Right ventricle myocardium inferior (tissue), 1 donor: ENCODE measurements at regions of chrX and their contacts with region 1.

Region 1: GRCh38 chrX:19334945-19335626 is 8.6 kb upstream of the PDHA1 start:
- DNase-seq: no peak
- ATAC-seq: no peak

Region 2: DNA sequence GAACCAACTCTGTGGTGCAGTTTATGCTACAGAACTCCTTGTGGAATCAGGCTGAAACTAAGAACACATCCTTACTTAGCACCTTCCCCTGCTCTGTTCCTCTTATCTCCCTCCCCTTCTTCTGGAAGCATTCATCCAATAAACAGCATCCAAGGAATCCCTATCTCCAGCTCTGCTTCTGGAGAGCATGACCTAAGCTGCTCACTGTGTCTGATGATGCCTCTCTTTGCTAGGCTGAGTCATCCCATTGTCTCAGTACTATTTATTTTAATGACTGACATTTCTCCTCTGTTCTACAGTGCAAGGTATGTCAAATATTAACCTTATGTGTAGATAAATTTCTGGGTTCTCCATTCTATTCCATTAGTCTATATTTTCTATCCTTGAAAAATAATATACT is 1185.6 kb before region 1 on chrX:
- intact Hi-C with region 1: no loop called
- DNase-seq: no peak
- ATAC-seq: no peak

Region 3: GRCh38 chrX:18390941-18391538 is 944.0 kb before region 1 on chrX:
- intact Hi-C with region 1: loop called (anchors 2 kb)
- DNase-seq: peak; percentile 75
- ATAC-seq: no peak

Region 4: GRCh38 chrX:18931972-18932371 is 403.1 kb before region 1 on chrX:
- intact Hi-C with region 1: loop called (anchors 5 kb)
- DNase-seq: no peak
- ATAC-seq: peak; percentile 39

Region 5: DNA sequence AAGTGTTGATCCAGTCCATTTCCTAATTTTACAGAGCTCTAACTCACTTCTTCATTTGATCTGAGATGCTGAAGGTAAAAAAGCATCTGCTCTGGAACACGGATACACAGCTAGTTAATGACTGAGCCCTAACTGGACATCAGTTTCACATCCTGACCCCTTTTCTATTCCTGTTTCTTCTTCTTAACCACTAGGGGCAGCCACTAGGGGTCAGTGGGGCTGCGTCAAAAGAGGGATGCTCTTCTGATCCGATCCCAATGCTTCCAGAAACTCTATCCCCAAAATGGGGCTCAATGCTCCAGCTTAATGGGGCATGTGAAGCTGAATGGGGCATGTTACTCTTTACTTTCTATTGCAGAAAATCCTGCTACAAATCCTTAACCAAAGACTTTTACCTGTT is 317.8 kb before region 1 on chrX:
- intact Hi-C with region 1: loop called (anchors 10 kb)
- DNase-seq: no peak
- ATAC-seq: no peak

Region 6: GRCh38 chrX:19649226-19649995 is 314.3 kb after region 1 on chrX:
- intact Hi-C with region 1: no loop called
- DNase-seq: no peak
- ATAC-seq: peak; percentile 37